Activated T-helper 1 cell treated with anti-CD3 and anti-CD28 coated beads, Interleukin-12 subunit alpha, Interleukin-12 subunit beta, Interleukin-2, Interleukin-4 antibody, amounts not matched to agents 30 ng/mL and 10 ng/mL and 1 ng/mL, durations not matched to agents 14 hours and 24 hours and 36 hours (primary cell): ENCODE measurements at regions of chr1 and their contacts with region 1.

Region 1: DNA sequence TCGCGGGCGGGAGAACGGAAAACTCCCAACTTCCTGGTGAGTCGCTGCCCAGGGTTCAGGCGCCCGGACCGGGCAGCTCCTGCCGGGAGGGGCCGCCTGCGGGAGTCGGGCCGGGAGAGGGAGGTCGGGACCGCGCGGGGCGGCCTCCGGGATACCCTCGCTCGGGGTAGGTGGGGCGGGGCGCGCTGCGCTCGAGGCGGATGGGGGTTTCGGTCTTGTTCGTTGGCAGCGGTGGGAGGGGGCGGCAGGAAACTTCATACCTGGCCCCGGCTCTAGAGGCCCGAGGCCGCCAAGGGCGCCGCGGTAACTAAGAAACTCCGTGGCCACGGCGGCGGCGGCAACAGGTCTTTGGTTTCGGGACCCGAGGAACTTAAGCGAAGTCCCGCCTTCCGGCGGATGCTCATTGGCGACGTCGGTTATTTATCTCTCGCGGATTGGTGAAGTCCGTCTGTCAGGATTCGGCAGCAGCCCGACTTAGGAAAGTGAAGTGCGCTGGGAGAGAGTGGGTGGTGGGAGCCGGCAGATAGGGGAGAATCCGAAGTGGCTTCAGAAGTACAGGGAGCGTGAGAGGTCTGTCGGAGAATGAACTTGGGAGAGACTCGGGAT is 546 bp downstream of the NEK7 start:
- DNase-seq: peak; percentile 76
- H3K4me3 Mint-ChIP-seq: peak overlapping the region; percentile 97
- H3K27ac Mint-ChIP-seq: peak overlapping the region; percentile 96
- H3K4me1 Mint-ChIP-seq: peaks cover 47% of the 10 kb centered on the region
- H3K27me3 Mint-ChIP-seq: no peaks in the 10 kb centered on the region

Region 2: GRCh38 chr1:197521118-197521739 is 636.1 kb before region 1 on chr1:
- intact Hi-C with region 1: loop called (anchors 2 kb)
- DNase-seq: no peak
- H3K4me3 Mint-ChIP-seq: no peak overlapping the region
- H3K27ac Mint-ChIP-seq: no peak overlapping the region
- H3K4me1 Mint-ChIP-seq: peaks cover 7% of the 10 kb centered on the region
- H3K27me3 Mint-ChIP-seq: no peaks in the 10 kb centered on the region

Region 3: DNA sequence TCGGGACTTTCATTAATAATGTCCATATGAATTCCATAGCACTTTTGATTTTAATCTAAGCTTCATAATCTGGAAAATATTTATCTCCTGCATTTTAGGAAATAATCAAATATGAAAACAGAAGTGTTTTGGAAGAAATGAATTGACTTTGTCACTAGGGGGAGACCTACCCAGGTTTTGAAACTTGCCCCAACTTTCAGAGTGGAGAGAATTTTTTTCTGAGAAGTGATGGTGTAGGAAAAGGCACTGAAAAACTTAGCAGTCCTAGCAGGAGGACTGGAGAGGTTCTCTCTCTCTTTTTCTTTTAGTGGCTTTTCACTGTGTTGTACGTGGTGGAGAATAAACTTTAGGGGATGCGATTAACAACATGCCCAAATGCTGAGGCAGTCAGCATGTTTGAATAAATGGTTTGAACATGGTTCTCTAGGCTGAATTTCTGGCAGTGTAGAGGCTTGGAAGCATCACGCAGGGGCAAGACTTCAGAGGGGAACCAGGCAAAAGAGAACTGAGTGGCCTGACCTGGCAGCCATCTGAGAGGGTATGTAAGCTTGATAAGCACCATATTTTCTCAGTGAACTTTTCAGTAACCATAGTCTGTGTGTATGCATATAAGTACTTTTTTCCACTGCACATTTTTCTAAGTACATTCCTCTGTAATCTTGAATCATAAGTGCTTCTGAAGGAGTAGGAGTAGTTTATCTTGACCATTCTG is 68.8 kb before region 1 on chr1:
- intact Hi-C with region 1: loop called (anchors 1 kb)
- DNase-seq: no peak
- H3K4me3 Mint-ChIP-seq: no peak overlapping the region
- H3K27ac Mint-ChIP-seq: no peak overlapping the region
- H3K4me1 Mint-ChIP-seq: peaks cover 8% of the 10 kb centered on the region
- H3K27me3 Mint-ChIP-seq: peaks cover 5% of the 10 kb centered on the region

Region 4: GRCh38 chr1:198187973-198188588 is 30.7 kb after region 1 on chr1:
- intact Hi-C with region 1: loop called (anchors 1 kb)
- DNase-seq: no peak
- H3K4me3 Mint-ChIP-seq: peak overlapping the region; percentile 49
- H3K27ac Mint-ChIP-seq: peak overlapping the region; percentile 78
- H3K4me1 Mint-ChIP-seq: peaks cover 67% of the 10 kb centered on the region
- H3K27me3 Mint-ChIP-seq: no peaks in the 10 kb centered on the region

Region 5: DNA sequence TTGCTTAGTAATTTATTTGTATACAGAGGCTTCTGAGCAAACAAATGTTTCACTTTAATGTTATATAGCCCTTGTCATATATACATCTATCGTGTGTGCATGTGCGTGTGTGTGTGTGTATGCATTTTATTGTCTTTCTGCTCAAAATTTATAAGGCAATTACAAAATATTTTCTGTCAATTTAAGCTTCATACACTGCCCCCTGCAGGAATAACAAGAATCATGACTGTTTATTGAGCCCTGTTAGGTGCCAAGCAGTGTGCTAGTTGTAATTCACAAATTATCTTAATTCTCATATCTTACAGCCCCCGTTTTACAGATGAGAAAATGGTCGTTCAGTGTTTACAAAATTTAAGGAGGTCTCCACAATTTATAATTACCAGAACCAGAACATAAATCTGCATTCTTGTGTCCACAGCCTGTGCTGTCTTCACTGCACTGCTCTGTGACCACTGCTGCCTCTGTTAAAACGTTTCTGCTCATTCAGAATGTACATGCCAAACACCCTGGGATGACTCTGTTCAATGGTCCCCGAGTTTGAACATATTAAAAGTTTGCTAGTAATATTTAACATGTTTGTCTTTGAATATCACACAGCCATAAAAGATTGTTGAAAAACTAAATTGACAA is 201.8 kb after region 1 on chr1:
- intact Hi-C with region 1: loop called (anchors 2 kb)
- DNase-seq: no peak
- H3K4me3 Mint-ChIP-seq: no peak overlapping the region
- H3K27ac Mint-ChIP-seq: no peak overlapping the region
- H3K4me1 Mint-ChIP-seq: no peaks in the 10 kb centered on the region
- H3K27me3 Mint-ChIP-seq: no peaks in the 10 kb centered on the region

Region 6: DNA sequence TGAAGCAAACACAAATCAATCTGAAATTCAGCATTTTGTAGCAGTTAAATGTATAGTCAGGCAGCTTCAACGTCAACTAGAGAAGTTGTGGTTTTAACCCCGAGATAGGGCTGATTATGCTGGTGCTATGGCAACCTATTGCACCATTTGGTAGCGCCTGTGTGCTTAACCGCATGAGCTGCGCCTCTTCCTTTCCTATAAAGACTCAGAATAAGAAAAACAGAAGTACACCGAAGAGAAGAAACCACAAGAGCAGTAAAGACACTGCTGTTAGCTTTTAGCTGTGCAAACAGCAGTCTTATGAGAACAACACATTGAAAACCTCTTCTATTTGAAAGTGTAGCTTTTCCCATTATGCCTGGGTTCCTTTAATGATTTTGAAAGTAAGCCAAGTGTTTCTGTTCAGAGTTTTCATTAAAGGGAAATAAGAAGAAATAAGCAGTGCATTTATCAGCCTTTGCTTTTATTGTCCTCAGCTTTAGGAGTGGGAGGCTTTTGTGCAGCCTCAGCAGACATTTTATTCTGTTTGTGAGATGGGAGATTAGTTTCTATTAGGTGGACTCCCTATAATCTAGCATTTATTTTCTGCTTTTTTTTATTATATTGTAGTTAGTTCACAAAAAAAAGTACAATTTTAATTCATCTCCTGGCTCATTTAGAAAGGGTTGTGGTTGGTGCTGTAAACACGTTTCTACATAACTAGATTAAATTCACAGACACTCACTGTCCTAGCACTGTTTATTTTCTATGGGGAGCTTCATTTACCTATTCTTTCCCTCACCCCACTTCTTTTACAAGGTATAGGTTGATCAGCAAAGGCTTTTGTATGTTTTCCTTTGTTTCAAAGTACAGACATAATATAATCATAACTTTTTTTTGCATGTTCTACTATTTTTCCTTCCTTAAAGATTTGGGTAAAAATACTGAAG is 524.8 kb after region 1 on chr1:
- intact Hi-C with region 1: loop called (anchors 2 kb)
- DNase-seq: peak; percentile 86
- H3K4me3 Mint-ChIP-seq: peak overlapping the region; percentile 78
- H3K27ac Mint-ChIP-seq: peak overlapping the region; percentile 91
- H3K4me1 Mint-ChIP-seq: peaks cover 80% of the 10 kb centered on the region
- H3K27me3 Mint-ChIP-seq: no peaks in the 10 kb centered on the region